BJ (cell line): ENCODE measurements at regions of chr7 and their contacts with region 1.

Region 1: GRCh38 chr7:141654551-141654950 is 47.4 kb downstream of the DENND11 start:
- DNase-seq: peak; percentile 1
- H3K4me3 ChIP-seq: no peak overlapping the region
- H3K27me3 ChIP-seq: no peaks in the 10 kb centered on the region
- CTCF ChIP-seq: peak; percentile 76

Region 2: DNA sequence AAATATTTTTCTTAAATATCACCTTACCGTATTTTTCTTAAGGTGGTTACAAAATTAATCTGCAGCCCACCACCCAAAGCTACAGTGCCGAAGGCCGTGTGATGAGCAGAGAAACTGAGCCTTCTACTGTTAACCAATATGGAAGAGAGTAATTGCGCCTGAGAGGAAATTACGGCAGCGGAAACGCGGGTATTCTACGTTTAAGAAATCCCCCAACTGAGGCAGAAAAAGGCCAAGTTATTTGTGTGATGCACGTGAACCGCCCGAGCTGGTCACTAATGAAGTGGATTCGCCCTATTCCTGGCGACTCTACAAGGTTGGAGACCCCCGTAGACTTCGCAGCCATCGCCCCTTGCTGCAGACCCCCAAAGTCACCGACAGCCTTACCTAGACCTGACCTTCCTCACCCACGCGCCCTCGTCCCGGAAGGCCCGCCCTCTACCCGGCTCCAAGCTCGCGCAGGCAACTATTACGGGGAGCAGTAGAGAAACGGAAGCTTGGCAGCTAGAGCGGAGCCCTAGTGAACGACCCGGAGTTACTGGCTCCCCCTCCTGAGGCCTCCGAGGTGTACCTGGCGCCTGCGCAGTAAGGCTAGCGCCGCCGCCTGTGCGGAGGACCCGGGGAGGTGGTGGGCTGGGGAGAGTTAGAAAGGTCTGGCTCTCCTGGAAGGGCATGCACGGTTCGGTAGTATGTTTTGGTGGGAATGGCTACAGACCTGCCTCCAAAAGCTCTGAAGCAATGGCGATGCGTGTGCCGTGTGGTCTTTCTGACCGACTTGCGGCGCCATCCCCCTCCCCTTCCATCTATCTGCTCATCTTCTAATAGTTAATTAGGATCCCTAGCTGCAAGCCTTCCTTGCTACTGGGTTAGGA is 639.8 kb before region 1 on chr7 and contains the start of gene MRPS33:
- CTCF ChIA-PET with region 1: interaction called, 10 read pairs
- POLR2A ChIA-PET with region 1: no interaction called
- DNase-seq: peak; percentile 62
- H3K4me3 ChIP-seq: peak within 1 kb of the TSS; percentile 59
- H3K27me3 ChIP-seq: no peaks in the 10 kb centered on the region
- CTCF ChIP-seq: peak; percentile 58
- polyA plus RNA-seq, gene MRPS33: 30.6 and 67.1 TPM in 2 replicates

Region 3: DNA sequence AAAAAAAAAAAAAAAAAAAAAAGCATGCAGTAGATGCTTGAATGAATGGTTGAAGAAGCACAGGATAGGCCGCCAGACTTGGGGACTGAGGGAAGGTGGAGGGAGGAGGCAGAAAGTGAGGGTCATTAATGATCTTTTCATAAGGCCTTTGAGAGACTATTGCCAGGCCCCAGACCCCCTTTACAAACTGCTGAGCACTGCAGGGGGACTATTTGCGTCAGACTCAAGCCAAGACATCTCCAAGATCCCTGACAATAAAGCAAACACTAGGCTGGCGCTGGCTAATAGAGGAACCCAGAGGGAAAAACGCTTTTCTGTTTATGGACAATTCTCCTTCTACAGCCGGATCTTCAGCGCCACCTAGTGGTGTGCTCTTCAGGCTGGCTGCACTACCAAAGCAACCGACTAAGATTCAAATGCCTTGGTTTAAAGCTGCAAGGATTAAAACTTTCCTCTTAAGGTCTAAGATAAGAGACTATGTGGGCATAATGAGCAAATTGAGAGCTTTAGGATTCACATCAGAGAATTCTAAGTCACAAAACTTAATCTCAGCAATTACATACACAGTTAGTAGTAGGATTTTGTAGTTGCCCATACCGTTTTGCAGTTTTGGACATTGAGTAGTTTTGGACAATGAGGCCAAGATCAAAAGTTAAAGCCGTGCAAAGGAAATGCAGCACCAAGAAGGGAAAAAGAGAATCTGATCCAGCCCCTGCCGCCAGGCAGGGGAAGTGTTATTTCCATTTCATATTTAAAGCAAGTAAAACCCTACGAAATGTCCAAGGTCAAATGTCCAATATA is 121.2 kb before region 1 on chr7:
- CTCF ChIA-PET with region 1: interaction called, 17 read pairs
- POLR2A ChIA-PET with region 1: no interaction called
- DNase-seq: no peak
- H3K4me3 ChIP-seq: no peak overlapping the region
- H3K27me3 ChIP-seq: 0 out of 2 replicates have a peak, but pooled peaks cover 2% of the 10 kb centered on the region
- CTCF ChIP-seq: peak; percentile 97

Region 4: DNA sequence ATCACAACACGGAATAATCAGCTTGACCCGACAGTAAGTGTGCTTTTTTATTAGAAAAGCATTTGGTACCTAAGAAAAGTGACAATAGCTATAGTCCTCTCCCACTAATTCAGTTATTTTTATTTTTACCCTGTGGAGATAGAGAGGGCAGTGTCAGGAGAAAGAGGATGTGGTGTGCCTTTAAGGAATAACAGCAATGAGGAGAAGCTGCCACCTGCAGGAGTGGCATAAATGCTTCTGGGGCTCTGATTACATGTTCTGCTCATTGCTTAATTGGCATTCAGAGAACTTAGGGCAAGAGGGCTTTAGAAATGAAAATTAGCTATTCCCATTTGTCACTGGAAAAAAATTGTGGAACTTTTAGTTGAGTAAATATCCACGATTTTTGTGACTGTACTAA is 12.7 kb before region 1 on chr7:
- CTCF ChIA-PET with region 1: interaction called, 11 read pairs
- POLR2A ChIA-PET with region 1: no interaction called
- DNase-seq: no peak
- H3K4me3 ChIP-seq: no peak overlapping the region
- H3K27me3 ChIP-seq: no peaks in the 10 kb centered on the region
- CTCF ChIP-seq: no peak

Region 5: GRCh38 chr7:141674702-141675101 is 20.2 kb after region 1 on chr7:
- CTCF ChIA-PET with region 1: no interaction called
- POLR2A ChIA-PET with region 1: no interaction called
- DNase-seq: no peak
- H3K4me3 ChIP-seq: no peak overlapping the region
- H3K27me3 ChIP-seq: no peaks in the 10 kb centered on the region
- CTCF ChIP-seq: no peak

Region 6: DNA sequence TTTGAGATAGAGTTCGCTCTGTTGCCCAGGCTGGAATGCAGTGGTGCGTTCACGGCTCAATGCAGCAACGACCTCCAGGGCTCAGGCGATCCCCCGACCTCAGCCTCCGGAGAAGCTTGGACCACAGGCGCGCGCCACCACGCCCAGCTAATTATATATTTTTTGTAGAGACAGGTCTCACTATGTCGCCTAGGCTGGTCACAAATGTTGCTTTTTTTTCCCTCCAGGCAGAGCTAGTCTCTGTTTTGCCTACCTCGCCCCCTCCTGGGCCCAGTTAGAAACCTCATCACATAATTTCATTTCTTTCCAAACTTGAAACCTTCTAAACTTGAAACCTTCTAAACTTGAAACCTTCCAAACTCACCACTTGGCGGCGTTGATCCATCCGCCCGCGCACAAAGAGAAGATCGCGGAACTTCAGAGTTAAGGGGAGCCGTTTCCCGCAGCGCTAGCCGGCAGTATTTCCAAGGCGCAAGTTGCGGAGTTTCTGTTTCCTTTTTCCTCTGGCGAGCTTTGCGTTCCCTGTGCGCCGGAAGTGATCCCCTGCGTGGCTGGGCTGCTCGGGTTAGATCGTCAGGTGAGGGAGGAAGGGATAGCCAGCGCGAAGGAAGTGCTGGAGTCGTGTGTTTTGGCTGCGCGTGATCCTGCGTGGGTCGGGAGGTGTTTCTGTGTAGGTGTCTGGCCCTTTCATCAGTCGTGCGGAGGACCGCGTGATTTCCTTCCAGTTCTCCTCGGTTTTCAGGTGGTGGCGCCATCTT is 83.5 kb after region 1 on chr7 and contains the start of gene SSBP1:
- CTCF ChIA-PET with region 1: interaction called, 17 read pairs
- POLR2A ChIA-PET with region 1: no interaction called
- DNase-seq: peak; percentile 82
- H3K4me3 ChIP-seq: peak within 1 kb of the TSS; percentile 88
- H3K27me3 ChIP-seq: no peaks in the 10 kb centered on the region
- CTCF ChIP-seq: peak; percentile 84
- polyA plus RNA-seq, gene SSBP1: 55.0 and 139 TPM in 2 replicates